Calu3 (cell line): ENCODE measurements at regions of chr19 and their contacts with region 1.

Region 1: GRCh38 chr19:11924886-11925650 is at the start of gene ZNF700:
- DNase-seq: peak; percentile 93
- H3K4me3 Mint-ChIP-seq: peak within 1 kb of the TSS; percentile 91
- H3K27ac Mint-ChIP-seq: peak within 1 kb of the TSS; percentile 92
- H3K4me1 Mint-ChIP-seq: peaks cover 18% of the 10 kb centered on the region
- H3K27me3 Mint-ChIP-seq: no peaks in the 10 kb centered on the region
- CTCF ChIP-seq: no peak
- total RNA-seq, gene ZNF700: 11.4 and 11.7 TPM in 2 replicates

Region 2: DNA sequence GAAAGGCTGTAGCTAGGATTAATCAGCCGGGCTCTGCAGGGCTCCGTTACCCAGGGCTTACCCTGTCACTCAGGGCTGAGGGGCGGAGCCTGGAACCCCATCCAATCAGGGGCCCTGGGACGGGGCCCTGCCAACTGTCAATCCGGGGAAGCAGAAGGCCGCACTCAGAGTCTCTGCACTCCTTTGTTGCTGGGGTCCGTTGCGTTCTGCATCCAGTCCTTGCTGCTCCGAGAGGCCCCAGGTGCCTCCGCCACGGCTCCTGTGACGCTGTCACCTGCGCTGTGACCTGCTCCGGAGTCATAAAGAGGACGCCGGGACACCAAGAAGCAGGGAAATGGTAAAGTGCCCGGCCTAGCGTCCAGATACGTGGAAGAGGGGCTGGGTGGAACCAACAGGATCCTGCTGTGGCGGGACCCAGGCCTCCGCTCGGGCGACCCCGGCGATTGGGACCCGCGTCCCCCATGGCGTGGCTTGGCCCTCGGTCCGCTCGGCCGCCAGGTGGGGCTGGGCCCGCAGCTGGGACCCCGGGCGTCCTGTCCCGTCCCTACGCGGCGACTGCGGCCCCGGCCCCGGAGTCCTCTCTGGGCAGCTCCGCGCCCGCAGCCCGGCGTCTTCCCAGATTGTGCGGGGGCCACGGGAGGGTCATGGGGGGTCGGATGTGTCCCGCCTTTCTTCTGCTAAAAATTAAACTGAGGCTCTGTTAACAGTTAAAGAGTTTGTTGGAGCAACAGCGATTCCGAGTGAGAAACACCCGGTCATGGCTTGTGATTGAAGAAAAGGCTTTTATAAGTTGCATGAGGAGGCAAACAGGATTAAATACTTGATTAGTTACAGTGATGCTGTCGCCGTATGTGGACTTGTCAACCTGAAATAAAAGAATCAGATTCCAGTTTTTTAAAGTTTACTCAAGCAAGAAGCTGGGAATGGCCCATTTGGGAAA is 126.4 kb before region 1 on chr19 and contains the start of gene ZNF491:
- CTCF ChIA-PET with region 1: interaction called, 10 read pairs
- intact Hi-C with region 1: no loop called
- DNase-seq: peak; percentile 79
- H3K4me3 Mint-ChIP-seq: peak within 1 kb of the TSS; percentile 77
- H3K27ac Mint-ChIP-seq: no peak within 1 kb of the TSS
- H3K4me1 Mint-ChIP-seq: no peaks in the 10 kb centered on the region
- H3K27me3 Mint-ChIP-seq: no peaks in the 10 kb centered on the region
- CTCF ChIP-seq: no peak
- total RNA-seq, gene ZNF491: 0.24 and 0.92 TPM in 2 replicates

Region 3: GRCh38 chr19:11814029-11814699 is 110.9 kb before region 1 on chr19 and contains the start of gene ZNF440:
- CTCF ChIA-PET with region 1: no interaction called
- intact Hi-C with region 1: loop called (anchors 10 kb)
- DNase-seq: peak; percentile 94
- H3K4me3 Mint-ChIP-seq: peak within 1 kb of the TSS; percentile 79
- H3K27ac Mint-ChIP-seq: peak within 1 kb of the TSS; percentile 80
- H3K4me1 Mint-ChIP-seq: no peaks in the 10 kb centered on the region
- H3K27me3 Mint-ChIP-seq: no peaks in the 10 kb centered on the region
- CTCF ChIP-seq: no peak
- total RNA-seq, gene ZNF440: 14.4 and 21.2 TPM in 2 replicates

Region 4: DNA sequence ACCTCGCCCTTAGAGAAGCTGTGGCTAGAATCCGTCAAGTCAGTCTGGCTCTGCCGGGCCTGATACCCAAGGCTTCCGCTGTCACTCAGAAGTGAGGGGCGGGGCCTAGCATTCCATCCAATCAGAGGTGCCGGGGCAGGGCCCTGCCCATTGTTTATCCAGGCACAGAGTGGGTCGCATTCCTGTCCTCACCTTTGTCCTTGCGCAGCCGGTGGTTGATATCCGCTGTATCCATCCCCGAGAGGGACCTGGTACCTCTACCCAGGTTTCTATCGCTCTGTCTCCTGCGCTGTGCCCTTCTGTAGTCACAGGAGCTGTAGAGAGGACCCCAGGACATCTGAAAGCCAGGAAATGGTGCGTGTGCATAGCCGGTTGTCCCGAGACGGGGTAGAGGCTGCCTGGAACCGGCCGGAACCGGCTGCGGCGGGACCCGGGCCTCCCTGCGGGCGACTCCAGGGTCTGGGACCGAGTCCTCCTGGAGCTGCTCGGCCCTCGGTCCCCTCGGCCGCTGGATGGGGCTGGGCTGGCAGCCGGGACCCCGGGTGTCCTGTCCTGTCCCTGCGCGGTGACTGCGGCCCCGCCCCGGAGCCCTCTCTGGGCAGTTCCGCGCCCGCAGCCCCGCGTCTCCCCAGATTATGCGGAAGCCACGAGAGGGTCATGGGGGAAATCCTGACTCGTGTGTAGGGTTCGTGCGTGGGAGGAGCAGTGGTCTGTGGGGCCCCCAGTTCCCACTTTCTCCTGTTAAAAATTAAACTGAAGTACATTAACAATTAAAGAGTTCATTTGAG is 40.0 kb after region 1 on chr19 and contains the start of gene ZNF763:
- CTCF ChIA-PET with region 1: interaction called, 3 read pairs
- intact Hi-C with region 1: loop called (anchors 1 kb)
- DNase-seq: peak; percentile 87
- H3K4me3 Mint-ChIP-seq: peak within 1 kb of the TSS; percentile 63
- H3K27ac Mint-ChIP-seq: no peak within 1 kb of the TSS
- H3K4me1 Mint-ChIP-seq: peaks cover 9% of the 10 kb centered on the region
- H3K27me3 Mint-ChIP-seq: no peaks in the 10 kb centered on the region
- CTCF ChIP-seq: no peak
- total RNA-seq, gene ZNF763: 1.7 and 2.0 TPM in 2 replicates

Region 5: GRCh38 chr19:11987405-11988281 is 62.6 kb after region 1 on chr19:
- CTCF ChIA-PET with region 1: interaction called, 26 read pairs
- intact Hi-C with region 1: loop called (anchors 2 kb)
- DNase-seq: peak; percentile 91
- H3K4me3 Mint-ChIP-seq: peak overlapping the region; percentile 83
- H3K27ac Mint-ChIP-seq: peak overlapping the region; percentile 54
- H3K4me1 Mint-ChIP-seq: no peaks in the 10 kb centered on the region
- H3K27me3 Mint-ChIP-seq: no peaks in the 10 kb centered on the region
- CTCF ChIP-seq: no peak